ENCODE measurements at regions of chr14 and their contacts with region 1.

Region 1: GRCh38 chr14:50396631-50397390 is at the start of gene CDKL1:
- DNase-seq: peak; percentile 15 to 51 (median 22)
- H3K4me3 ChIP-seq: peak within 1 kb of the TSS; percentile 73
- H3K4me3 Mint-ChIP-seq: peak within 1 kb of the TSS; percentile 88 to 95 (median 90)
- H3K27ac ChIP-seq: no peak within 1 kb of the TSS
- H3K27ac Mint-ChIP-seq: peak within 1 kb of the TSS in 7 of 8 donors; percentile 24 to 88 (median 66)
- H3K4me1 ChIP-seq: no peaks in the 10 kb centered on the region
- H3K4me1 Mint-ChIP-seq: peaks cover 7 to 19% (median 15%) of the 10 kb centered on the region in 3 donors
- H3K27me3 ChIP-seq: no peaks in the 10 kb centered on the region
- H3K27me3 Mint-ChIP-seq: peaks cover 0 to 1% of the 10 kb centered on the region in 2 donors
- total RNA-seq, gene CDKL1: 4.8 to 5.8 TPM

Region 2: GRCh38 chr14:49581209-49582112 is 815.4 kb before region 1 on chr14:
- CTCF ChIA-PET with region 1: no interaction called
- POLR2A ChIA-PET with region 1: no interaction called
- DNase-seq: no peak
- H3K4me3 ChIP-seq: no peak overlapping the region
- H3K4me3 Mint-ChIP-seq: peak overlapping the region in 3 of 7 donors; percentile 6 to 20 (median 14)
- H3K27ac ChIP-seq: no peak overlapping the region
- H3K27ac Mint-ChIP-seq: peak overlapping the region in 7 of 8 donors; percentile 23 to 99 (median 71)
- H3K4me1 ChIP-seq: peaks cover 36% of the 10 kb centered on the region
- H3K4me1 Mint-ChIP-seq: peaks cover 60 to 83% (median 69%) of the 10 kb centered on the region in 3 donors
- H3K27me3 ChIP-seq: no peaks in the 10 kb centered on the region
- H3K27me3 Mint-ChIP-seq: peaks cover 0 to 5% of the 10 kb centered on the region in 2 donors

Region 3: DNA sequence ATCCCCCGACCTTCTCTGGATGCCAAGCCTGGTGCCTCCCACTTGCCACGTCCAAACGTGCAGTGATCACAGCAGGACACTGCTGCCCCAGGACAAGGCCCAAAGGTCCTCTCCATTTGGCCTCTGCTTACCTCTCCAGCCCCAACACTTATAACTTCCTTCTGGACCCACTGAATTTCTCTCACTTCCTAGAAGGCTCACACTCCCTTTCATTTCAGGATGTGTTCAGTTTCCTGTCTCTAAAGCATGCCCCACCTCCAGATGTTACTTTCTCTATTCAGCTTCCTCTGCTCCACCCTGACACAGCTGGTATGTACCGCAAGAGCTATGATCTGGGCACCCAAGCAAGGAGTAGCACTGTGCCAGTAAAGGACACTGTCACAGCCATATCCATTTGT is 33.1 kb before region 1 on chr14:
- CTCF ChIA-PET with region 1: interaction called, 5 read pairs
- POLR2A ChIA-PET with region 1: interaction called, 11 read pairs
- DNase-seq: peak; percentile 26 to 71 (median 50)
- H3K4me3 ChIP-seq: peak overlapping the region; percentile 94
- H3K4me3 Mint-ChIP-seq: peak overlapping the region; percentile 86 to 95 (median 90)
- H3K27ac ChIP-seq: peak overlapping the region; percentile 81
- H3K27ac Mint-ChIP-seq: peak overlapping the region; percentile 84 to 97 (median 96)
- H3K4me1 ChIP-seq: peaks cover 19% of the 10 kb centered on the region
- H3K4me1 Mint-ChIP-seq: peaks cover 41 to 61% (median 58%) of the 10 kb centered on the region in 3 donors
- H3K27me3 ChIP-seq: no peaks in the 10 kb centered on the region
- H3K27me3 Mint-ChIP-seq: no peaks in the 10 kb centered on the region

Region 4: GRCh38 chr14:50512463-50512862 is 115.7 kb after region 1 on chr14:
- CTCF ChIA-PET with region 1: no interaction called
- POLR2A ChIA-PET with region 1: no interaction called
- DNase-seq: no peak
- H3K4me3 ChIP-seq: no peak overlapping the region
- H3K4me3 Mint-ChIP-seq: no peak overlapping the region
- H3K27ac ChIP-seq: no peak overlapping the region
- H3K27ac Mint-ChIP-seq: no peak overlapping the region
- H3K4me1 ChIP-seq: no peaks in the 10 kb centered on the region
- H3K4me1 Mint-ChIP-seq: peaks cover 24 to 56% (median 45%) of the 10 kb centered on the region in 3 donors
- H3K27me3 ChIP-seq: no peaks in the 10 kb centered on the region
- H3K27me3 Mint-ChIP-seq: no peaks in the 10 kb centered on the region